ENCODE measurements at regions of chr20 and their contacts with region 1.

Region 1: GRCh38 chr20:6212903-6213302 is 90.1 kb upstream of the FERMT1 start:
- DNase-seq: no peak
- ATAC-seq: no peak
- H3K4me3 ChIP-seq: no peak overlapping the region
- H3K27ac ChIP-seq: no peak overlapping the region
- H3K4me1 ChIP-seq: no peaks in the 10 kb centered on the region
- H3K27me3 ChIP-seq: no peaks in the 10 kb centered on the region
- CTCF ChIP-seq: no peak
- POLR2A ChIP-seq: no peak

Region 2: DNA sequence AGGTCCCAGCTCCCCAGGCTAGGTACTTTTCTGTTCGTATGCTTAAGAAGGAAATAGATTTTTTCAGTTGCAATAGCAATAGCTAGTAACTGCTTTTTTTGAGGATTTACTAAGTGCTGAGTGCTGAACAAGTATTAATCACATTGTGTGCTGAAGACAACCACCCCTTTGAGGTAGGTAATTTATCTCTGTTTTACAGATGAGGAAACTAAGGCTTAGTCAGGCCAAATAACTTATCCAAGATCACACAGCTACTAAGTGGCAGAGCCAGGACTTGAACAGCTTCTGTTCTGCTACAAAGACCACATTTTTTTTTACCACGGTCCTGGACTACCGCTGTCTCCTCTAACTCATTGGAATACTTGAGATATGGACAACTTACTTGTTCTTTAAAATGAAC is 198.9 kb before region 1 on chr20:
- in situ Hi-C with region 1: no loop called
- intact Hi-C with region 1: no loop called
- DNase-seq: no peak
- ATAC-seq: no peak
- H3K4me3 ChIP-seq: no peak overlapping the region
- H3K27ac ChIP-seq: no peak overlapping the region
- H3K4me1 ChIP-seq: peaks cover 2 to 4% of the 10 kb centered on the region in 2 donors
- H3K27me3 ChIP-seq: no peaks in the 10 kb centered on the region
- CTCF ChIP-seq: no peak
- POLR2A ChIP-seq: no peak

Region 3: GRCh38 chr20:6200092-6200491 is 12.8 kb before region 1 on chr20:
- in situ Hi-C with region 1: no loop called
- intact Hi-C with region 1: loop called (anchors 1 kb)
- DNase-seq: no peak
- ATAC-seq: no peak
- H3K4me3 ChIP-seq: no peak overlapping the region
- H3K27ac ChIP-seq: no peak overlapping the region
- H3K4me1 ChIP-seq: no peaks in the 10 kb centered on the region
- H3K27me3 ChIP-seq: no peaks in the 10 kb centered on the region
- CTCF ChIP-seq: no peak
- POLR2A ChIP-seq: no peak

Measured in gastrocnemius medialis (tissue), 4 donors.